ENCODE measurements at regions of chr11 and their contacts with region 1.

Region 1: DNA sequence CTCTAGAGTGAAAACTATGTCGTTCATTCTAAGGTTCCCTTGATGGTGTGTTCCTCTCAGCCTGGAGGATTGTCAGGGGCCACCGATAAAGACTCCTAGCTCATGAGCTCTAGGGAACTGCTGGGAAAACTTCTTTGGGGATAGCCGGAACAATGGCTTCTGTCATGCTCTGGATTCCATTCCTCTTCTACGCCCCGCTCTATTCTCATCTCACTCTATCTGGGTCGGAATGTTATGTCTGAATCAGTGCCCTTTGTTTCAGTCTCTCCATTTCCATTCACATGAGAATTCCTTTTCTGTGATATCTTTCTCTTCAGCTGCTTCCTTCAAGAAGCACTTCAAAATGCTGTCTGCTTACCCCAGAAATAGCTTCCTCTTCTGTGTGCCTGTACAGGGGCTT is 16.9 kb upstream of the SLCO2B1 start:
- DNase-seq: no peak
- H3K4me3 ChIP-seq: no peak overlapping the region
- H3K27ac ChIP-seq: no peak overlapping the region
- H3K4me1 ChIP-seq: no peaks in the 10 kb centered on the region
- H3K27me3 ChIP-seq: peaks cover 91% of the 10 kb centered on the region
- CTCF ChIP-seq: no peak

Region 2: DNA sequence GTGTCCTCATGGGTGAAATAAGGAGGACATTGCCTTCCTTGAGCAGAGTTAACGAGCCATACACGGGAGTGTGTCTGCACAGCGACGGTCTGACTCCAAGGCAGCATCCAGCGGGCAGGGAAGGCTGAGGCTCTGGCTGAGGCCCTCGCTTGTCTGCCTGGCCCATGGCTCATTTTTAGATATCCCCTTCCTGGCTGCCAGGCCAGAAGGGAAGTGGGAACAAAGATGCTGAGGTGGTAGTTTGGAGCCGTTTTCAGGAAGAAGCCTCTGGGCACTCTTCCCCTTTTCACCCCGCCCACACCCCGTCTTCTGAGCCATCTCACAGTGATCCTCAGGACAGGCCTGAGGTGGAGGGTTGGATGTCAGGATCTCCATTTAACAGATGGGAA is 13.9 kb after region 1 on chr11:
- CTCF ChIA-PET with region 1: no interaction called
- POLR2A ChIA-PET with region 1: no interaction called
- intact Hi-C with region 1: no loop called
- DNase-seq: no peak
- H3K4me3 ChIP-seq: no peak overlapping the region
- H3K27ac ChIP-seq: no peak overlapping the region
- H3K4me1 ChIP-seq: no peaks in the 10 kb centered on the region
- H3K27me3 ChIP-seq: peaks cover 75% of the 10 kb centered on the region
- CTCF ChIP-seq: no peak

Region 3: GRCh38 chr11:75223954-75224643 is 90.1 kb after region 1 on chr11:
- CTCF ChIA-PET with region 1: no interaction called
- POLR2A ChIA-PET with region 1: no interaction called
- intact Hi-C with region 1: no loop called
- DNase-seq: no peak
- H3K4me3 ChIP-seq: no peak overlapping the region
- H3K27ac ChIP-seq: no peak overlapping the region
- H3K4me1 ChIP-seq: no peaks in the 10 kb centered on the region
- H3K27me3 ChIP-seq: peaks cover 59% of the 10 kb centered on the region
- CTCF ChIP-seq: no peak

Region 4: GRCh38 chr11:75260411-75261177 is 126.6 kb after region 1 on chr11:
- CTCF ChIA-PET with region 1: no interaction called
- POLR2A ChIA-PET with region 1: interaction called, 26 read pairs
- intact Hi-C with region 1: no loop called
- DNase-seq: no peak
- H3K4me3 ChIP-seq: no peak overlapping the region
- H3K27ac ChIP-seq: no peak overlapping the region
- H3K4me1 ChIP-seq: peaks cover 6% of the 10 kb centered on the region
- H3K27me3 ChIP-seq: 0 out of 2 replicates have a peak, but pooled peaks cover 4% of the 10 kb centered on the region
- CTCF ChIP-seq: no peak